Panc1 (cell line): ENCODE measurements at regions of chr7 and their contacts with region 1.

Region 1: GRCh38 chr7:71733107-71733870 is 601.3 kb downstream of the GALNT17 start:
- DNase-seq: peak; percentile 45
- ATAC-seq: peak; percentile 91
- H3K4me3 ChIP-seq: peak overlapping the region in 1 of 2 experiments; percentile 30; a peak in 1 of 4 replicates
- H3K27ac ChIP-seq: no peak overlapping the region
- H3K4me1 ChIP-seq: no peaks in the 10 kb centered on the region
- H3K27me3 ChIP-seq: no peaks in the 10 kb centered on the region
- CTCF ChIP-seq: peak; percentile 91

Region 2: GRCh38 chr7:70829221-70830059 is 903.8 kb before region 1 on chr7:
- CTCF ChIA-PET with region 1: interaction called, 5 read pairs
- POLR2A ChIA-PET with region 1: no interaction called
- in situ Hi-C with region 1: no loop called
- intact Hi-C with region 1: loop called (anchors 1 kb)
- DNase-seq: peak; percentile 55
- ATAC-seq: peak; percentile 93
- H3K4me3 ChIP-seq: 0 out of 4 replicates have a peak overlapping the region, but pooled peaks of 1 of the 2 experiments have one; percentile 14
- H3K27ac ChIP-seq: no peak overlapping the region
- H3K4me1 ChIP-seq: no peaks in the 10 kb centered on the region
- H3K27me3 ChIP-seq: no peaks in the 10 kb centered on the region; the same call in 1 of the 2 replicates
- CTCF ChIP-seq: peak; percentile 88

Region 3: DNA sequence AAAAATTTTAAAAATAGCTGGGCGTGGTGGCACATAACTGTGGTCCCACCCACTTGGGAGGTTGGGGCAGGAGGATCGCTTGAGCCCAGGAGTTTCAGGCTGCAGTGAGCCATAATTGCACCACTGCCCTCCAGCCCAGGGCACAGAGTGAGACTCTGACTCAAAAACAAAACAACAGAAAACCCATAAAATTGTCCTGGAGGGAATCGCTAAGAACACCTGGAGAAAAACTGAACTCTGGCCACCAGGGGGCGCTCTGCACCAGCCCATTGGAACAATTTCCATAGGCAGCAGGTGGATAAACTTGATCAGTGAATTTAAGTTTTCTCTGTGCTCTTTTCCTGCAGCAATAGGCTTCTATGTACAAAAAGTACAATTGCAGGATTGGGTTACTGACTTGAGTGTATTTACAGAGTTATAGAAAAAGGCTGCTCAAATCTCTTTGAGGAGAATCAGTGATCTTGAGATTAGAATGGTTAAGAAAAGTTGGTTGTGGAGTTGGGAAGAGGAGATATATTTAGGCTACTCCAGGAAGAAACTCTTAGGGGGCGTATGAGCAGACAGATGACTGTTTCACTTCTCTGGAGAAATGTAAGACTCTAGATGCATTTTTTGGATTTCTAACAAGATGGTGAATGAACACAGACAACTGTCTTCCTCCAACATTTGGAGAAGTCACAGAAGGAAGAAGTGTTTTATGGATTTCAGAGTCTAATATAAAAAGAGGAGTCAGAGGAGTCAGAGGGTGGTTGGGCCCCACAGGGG is 876.2 kb before region 1 on chr7:
- CTCF ChIA-PET with region 1: no interaction called
- POLR2A ChIA-PET with region 1: no interaction called
- in situ Hi-C with region 1: no loop called
- intact Hi-C with region 1: loop called (anchors 2 kb)
- DNase-seq: peak; percentile 48
- ATAC-seq: peak; percentile 45; the same call in 1 of the 2 replicates
- H3K4me3 ChIP-seq: no peak overlapping the region
- H3K27ac ChIP-seq: no peak overlapping the region
- H3K4me1 ChIP-seq: no peaks in the 10 kb centered on the region
- H3K27me3 ChIP-seq: no peaks in the 10 kb centered on the region
- CTCF ChIP-seq: peak; percentile 86

Region 4: DNA sequence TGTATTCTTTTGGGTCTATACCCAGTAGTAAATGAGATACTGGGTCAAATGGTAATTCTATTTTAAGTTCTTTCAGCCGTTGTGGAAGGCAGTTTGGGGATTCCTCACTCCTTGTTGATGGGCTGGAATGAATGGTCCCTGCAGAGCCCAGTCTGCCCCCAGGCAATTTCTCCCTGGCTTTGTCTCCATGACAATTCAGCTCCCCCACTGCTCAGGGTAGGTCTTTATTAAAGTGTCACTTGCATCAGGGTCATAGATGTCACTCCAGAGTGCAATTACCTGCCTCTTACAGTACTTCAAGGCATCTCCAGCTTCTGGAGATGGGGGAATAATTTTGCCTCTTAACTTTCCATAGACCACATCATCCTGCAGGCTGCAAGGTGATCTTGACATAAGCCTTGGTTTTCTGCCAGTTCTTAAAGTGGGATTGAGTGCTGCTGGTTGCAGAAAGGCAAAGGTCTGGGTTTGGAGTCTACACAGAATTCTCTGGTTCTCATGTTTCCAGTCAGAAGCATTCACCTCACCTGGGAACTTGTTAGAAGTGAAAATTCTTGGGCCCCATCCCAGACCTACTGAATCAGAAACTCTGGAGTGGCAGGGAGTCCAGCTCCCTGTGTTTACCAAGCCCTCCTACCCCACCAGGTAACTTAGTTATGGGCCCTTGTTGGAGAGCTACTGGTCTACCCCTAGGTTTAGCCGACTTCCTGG is 159.0 kb before region 1 on chr7:
- CTCF ChIA-PET with region 1: no interaction called
- POLR2A ChIA-PET with region 1: no interaction called
- in situ Hi-C with region 1: no loop called
- intact Hi-C with region 1: no loop called
- DNase-seq: no peak
- ATAC-seq: no peak
- H3K4me3 ChIP-seq: no peak overlapping the region
- H3K27ac ChIP-seq: no peak overlapping the region
- H3K4me1 ChIP-seq: no peaks in the 10 kb centered on the region
- H3K27me3 ChIP-seq: no peaks in the 10 kb centered on the region
- CTCF ChIP-seq: no peak

Region 5: DNA sequence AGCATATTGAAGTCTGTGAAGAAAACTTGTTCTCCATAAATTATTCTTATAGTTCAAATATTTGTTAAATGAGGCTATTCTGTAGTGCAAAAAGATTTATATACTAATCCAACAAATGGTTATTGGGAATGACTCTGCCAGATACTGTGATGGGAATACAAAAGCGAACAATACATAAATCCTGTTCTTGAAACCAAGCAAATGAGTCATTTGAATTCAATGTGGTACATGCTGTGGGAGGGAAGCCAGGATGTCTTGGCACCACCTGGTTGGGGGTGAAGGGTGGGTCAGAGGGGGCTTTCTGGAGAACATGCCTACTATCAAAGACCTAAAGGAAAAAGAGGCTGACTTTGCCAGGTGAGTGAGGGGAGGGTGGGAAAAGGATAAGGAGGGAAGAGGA is 84.6 kb after region 1 on chr7:
- CTCF ChIA-PET with region 1: no interaction called
- POLR2A ChIA-PET with region 1: interaction called, 12 read pairs
- in situ Hi-C with region 1: no loop called
- intact Hi-C with region 1: no loop called
- DNase-seq: no peak
- ATAC-seq: no peak
- H3K4me3 ChIP-seq: no peak overlapping the region
- H3K27ac ChIP-seq: no peak overlapping the region
- H3K4me1 ChIP-seq: no peaks in the 10 kb centered on the region
- H3K27me3 ChIP-seq: no peaks in the 10 kb centered on the region
- CTCF ChIP-seq: no peak